CD8-positive, alpha-beta T cell (primary cell): ENCODE measurements at regions of chr17 and their contacts with region 1.

Region 1: DNA sequence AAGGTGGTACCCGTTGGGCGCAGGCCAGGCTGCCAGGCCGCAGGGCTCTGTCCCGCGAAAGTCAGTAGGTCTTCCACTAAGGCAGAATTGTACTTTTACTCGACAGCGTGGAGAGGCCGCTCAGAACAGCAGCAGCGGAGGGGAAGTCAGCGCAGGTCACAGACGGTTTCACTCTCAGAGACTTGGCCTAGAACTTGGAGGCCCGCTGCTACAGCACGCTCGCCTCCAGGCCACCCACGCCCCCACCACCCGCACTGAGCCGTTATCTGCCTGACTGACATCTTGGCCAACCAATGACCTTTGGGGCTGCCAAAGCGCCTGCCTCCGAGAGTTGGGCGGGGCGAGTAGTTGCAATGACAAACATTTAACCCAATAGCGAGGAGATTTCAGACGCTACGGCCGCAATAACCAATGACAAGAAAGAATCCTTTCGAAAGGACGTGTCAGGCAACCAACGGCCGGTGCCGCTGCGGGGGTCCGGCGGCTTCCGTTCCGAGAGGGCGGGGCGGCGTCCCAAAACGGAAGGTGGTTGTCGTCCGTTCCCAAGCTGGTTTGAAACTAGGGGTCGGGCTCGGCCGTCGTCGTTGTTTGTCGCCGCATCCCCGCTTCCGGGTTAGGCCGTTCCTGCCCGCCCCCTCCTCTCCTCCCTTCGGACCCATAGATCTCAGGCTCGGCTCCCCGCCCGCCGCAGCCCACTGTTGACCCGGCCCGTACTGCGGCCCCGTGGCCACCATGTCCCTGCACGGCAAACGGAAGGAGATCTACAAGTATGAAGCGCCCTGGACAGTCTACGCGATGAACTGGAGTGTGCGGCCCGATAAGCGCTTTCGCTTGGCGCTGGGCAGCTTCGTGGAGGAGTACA is at the start of gene DCAF7:
- DNase-seq: peak; percentile 99 to 100 (median 99)
- ATAC-seq: peak; percentile 94
- H3K4me3 ChIP-seq: peak within 1 kb of the TSS; percentile 99 to 100
- H3K4me3 Mint-ChIP-seq: peak within 1 kb of the TSS; percentile 98
- H3K27ac ChIP-seq: peak within 1 kb of the TSS; percentile 86 to 97
- H3K27ac Mint-ChIP-seq: peak within 1 kb of the TSS; percentile 98
- H3K4me1 ChIP-seq: peaks cover 39% of the 10 kb centered on the region
- H3K4me1 Mint-ChIP-seq: peaks cover 45% of the 10 kb centered on the region
- H3K27me3 ChIP-seq: no peaks in the 10 kb centered on the region
- H3K27me3 Mint-ChIP-seq: no peaks in the 10 kb centered on the region
- CTCF ChIP-seq: no peak
- total RNA-seq, gene DCAF7: 10.7 to 11.7 TPM

Region 2: GRCh38 chr17:63445979-63446691 is 104.0 kb before region 1 on chr17 and contains the start of gene CYB561:
- CTCF ChIA-PET with region 1: interaction called, 3 read pairs
- POLR2A ChIA-PET with region 1: interaction called, 4 read pairs
- intact Hi-C with region 1: loop called in 1 of 2 experiments (anchors 5 kb)
- DNase-seq: peak; percentile 41 to 87 (median 65)
- ATAC-seq: peak; percentile 65
- H3K4me3 ChIP-seq: peak within 1 kb of the TSS; percentile 59 to 61
- H3K4me3 Mint-ChIP-seq: peak within 1 kb of the TSS; percentile 77
- H3K27ac ChIP-seq: peak within 1 kb of the TSS; percentile 49 to 90
- H3K27ac Mint-ChIP-seq: peak within 1 kb of the TSS; percentile 83
- H3K4me1 ChIP-seq: peaks cover 12% of the 10 kb centered on the region
- H3K4me1 Mint-ChIP-seq: peaks cover 33% of the 10 kb centered on the region
- H3K27me3 ChIP-seq: no peaks in the 10 kb centered on the region
- H3K27me3 Mint-ChIP-seq: no peaks in the 10 kb centered on the region
- CTCF ChIP-seq: peak; percentile 27
- total RNA-seq, gene CYB561: 13.7 to 14.9 TPM

Region 3: GRCh38 chr17:63600569-63601438 is 50.6 kb after region 1 on chr17 and contains the start of gene TACO1:
- CTCF ChIA-PET with region 1: no interaction called
- POLR2A ChIA-PET with region 1: interaction called, 6 read pairs
- intact Hi-C with region 1: loop called (anchors 1 kb)
- DNase-seq: peak; percentile 62 to 87 (median 76)
- ATAC-seq: peak; percentile 82
- H3K4me3 ChIP-seq: peak within 1 kb of the TSS; percentile 69 to 99
- H3K4me3 Mint-ChIP-seq: peak within 1 kb of the TSS; percentile 96
- H3K27ac ChIP-seq: peak within 1 kb of the TSS; percentile 64 to 80
- H3K27ac Mint-ChIP-seq: peak within 1 kb of the TSS; percentile 95
- H3K4me1 ChIP-seq: peaks cover 22% of the 10 kb centered on the region
- H3K4me1 Mint-ChIP-seq: peaks cover 49% of the 10 kb centered on the region
- H3K27me3 ChIP-seq: no peaks in the 10 kb centered on the region
- H3K27me3 Mint-ChIP-seq: no peaks in the 10 kb centered on the region
- CTCF ChIP-seq: no peak
- total RNA-seq, gene TACO1: 13.7 to 15.9 TPM

Region 4: GRCh38 chr17:63741221-63742049 is 191.3 kb after region 1 on chr17 and contains the start of gene STRADA:
- CTCF ChIA-PET with region 1: no interaction called
- POLR2A ChIA-PET with region 1: no interaction called
- intact Hi-C with region 1: loop called (anchors 1 kb)
- DNase-seq: peak; percentile 97 to 100 (median 99)
- ATAC-seq: peak; percentile 92
- H3K4me3 ChIP-seq: peak within 1 kb of the TSS; percentile 58 to 86
- H3K4me3 Mint-ChIP-seq: peak within 1 kb of the TSS; percentile 88
- H3K27ac ChIP-seq: peak within 1 kb of the TSS; percentile 81 to 91
- H3K27ac Mint-ChIP-seq: peak within 1 kb of the TSS; percentile 94
- H3K4me1 ChIP-seq: peaks cover 14% of the 10 kb centered on the region
- H3K4me1 Mint-ChIP-seq: peaks cover 27% of the 10 kb centered on the region
- H3K27me3 ChIP-seq: no peaks in the 10 kb centered on the region
- H3K27me3 Mint-ChIP-seq: no peaks in the 10 kb centered on the region
- CTCF ChIP-seq: no peak
- total RNA-seq, gene STRADA: 54.7 to 63.6 TPM

Region 5: DNA sequence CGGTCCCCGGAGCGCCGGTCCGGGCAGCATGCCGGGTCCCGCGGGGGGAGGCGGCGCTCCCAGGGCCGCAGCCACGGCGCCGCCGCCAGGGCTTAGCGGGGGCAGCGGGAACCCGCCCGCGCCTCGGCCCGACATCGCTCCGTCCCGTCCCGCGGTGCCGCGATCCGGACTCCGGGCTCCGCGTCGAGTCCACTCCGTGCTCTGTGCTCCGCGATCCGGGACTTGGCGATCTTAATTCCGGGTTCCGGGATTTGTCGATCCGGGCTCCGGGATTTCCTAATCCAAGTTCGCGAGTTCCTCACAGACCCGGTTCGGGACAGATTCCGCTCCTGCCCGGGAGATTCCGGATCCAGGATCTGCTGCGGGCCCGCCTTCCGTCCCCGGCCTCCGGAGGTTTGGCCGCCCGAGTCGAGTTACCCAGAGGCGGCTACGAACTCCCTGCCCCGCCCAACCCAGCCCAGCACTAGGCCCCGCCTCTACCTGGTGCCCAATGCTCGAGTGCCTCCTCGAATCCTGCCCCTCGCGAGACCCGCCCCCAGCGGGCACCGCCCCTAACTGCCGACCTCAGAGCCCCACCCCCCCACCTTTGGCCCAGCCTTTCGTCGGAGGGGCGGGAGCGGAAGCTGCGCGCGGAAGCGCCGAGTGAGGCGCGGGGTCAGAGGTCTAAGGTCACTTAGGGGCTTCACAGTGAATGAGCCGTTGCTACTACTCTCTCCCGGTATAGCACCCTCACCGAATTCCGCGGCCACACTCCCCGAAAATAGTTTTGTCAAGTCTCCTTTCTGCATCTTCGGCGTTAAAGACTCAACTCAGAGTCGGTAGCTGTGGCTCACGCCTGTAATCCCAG is 292.6 kb after region 1 on chr17 and contains the start of gene SMARCD2:
- CTCF ChIA-PET with region 1: no interaction called
- POLR2A ChIA-PET with region 1: no interaction called
- intact Hi-C with region 1: loop called in 1 of 2 experiments (anchors 2 kb)
- DNase-seq: peak; percentile 99
- ATAC-seq: peak; percentile 91
- H3K4me3 ChIP-seq: peak within 1 kb of the TSS; percentile 86 to 95
- H3K4me3 Mint-ChIP-seq: peak within 1 kb of the TSS; percentile 92
- H3K27ac ChIP-seq: peak within 1 kb of the TSS; percentile 88 to 95
- H3K27ac Mint-ChIP-seq: peak within 1 kb of the TSS; percentile 92
- H3K4me1 ChIP-seq: peaks cover 43% of the 10 kb centered on the region
- H3K4me1 Mint-ChIP-seq: peaks cover 30% of the 10 kb centered on the region
- H3K27me3 ChIP-seq: no peaks in the 10 kb centered on the region
- H3K27me3 Mint-ChIP-seq: no peaks in the 10 kb centered on the region
- CTCF ChIP-seq: no peak
- total RNA-seq, gene SMARCD2: 121 TPM